Caco-2 (cell line): ENCODE measurements at regions of chr11 and their contacts with region 1.

Region 1: DNA sequence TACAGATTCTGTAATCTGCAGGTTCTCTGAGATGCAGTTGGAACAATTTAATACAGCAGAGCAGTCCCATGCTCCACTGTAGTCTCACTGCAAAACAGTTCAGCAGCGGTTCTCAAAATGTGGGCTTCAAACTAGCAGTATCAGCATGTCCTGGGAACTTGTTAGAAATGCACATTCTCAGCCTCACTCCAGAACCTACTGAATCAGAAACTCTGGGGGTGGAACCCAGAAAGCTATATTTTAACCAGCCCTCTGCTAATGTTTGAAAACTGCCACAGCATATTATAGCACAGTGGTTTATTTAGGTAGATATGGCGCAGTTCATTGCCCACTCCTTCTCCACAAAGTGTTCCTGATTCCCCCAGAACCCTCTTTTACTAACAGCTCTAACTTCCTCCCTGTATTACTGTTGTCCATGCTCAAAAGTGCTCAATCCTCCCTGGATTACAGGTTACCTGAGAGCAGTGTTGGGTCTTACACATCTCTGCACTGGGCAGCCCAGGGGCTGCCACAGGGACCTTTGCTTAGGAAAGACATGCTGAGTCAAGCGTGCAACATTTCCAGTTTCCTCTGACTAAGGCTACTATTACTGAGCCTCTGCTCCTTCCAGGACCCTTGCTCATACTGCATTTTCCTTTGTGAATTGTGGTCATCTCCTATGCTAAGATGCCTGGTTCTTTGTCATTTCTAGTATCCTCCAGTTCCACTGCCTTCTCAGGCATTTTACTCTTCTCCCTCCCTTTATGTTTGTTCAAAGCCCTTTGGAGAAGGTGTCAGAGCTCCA is 7.7 kb upstream of the DGAT2 start:
- DNase-seq: no peak
- H3K4me3 ChIP-seq: no peak overlapping the region
- H3K4me3 Mint-ChIP-seq: no peak overlapping the region
- H3K27ac Mint-ChIP-seq: peak overlapping the region; percentile 15
- H3K4me1 ChIP-seq: peaks cover 35% of the 10 kb centered on the region
- H3K4me1 Mint-ChIP-seq: peaks cover 34% of the 10 kb centered on the region
- H3K27me3 ChIP-seq: no peaks in the 10 kb centered on the region
- H3K27me3 Mint-ChIP-seq: no peaks in the 10 kb centered on the region
- CTCF ChIP-seq: no peak

Region 2: DNA sequence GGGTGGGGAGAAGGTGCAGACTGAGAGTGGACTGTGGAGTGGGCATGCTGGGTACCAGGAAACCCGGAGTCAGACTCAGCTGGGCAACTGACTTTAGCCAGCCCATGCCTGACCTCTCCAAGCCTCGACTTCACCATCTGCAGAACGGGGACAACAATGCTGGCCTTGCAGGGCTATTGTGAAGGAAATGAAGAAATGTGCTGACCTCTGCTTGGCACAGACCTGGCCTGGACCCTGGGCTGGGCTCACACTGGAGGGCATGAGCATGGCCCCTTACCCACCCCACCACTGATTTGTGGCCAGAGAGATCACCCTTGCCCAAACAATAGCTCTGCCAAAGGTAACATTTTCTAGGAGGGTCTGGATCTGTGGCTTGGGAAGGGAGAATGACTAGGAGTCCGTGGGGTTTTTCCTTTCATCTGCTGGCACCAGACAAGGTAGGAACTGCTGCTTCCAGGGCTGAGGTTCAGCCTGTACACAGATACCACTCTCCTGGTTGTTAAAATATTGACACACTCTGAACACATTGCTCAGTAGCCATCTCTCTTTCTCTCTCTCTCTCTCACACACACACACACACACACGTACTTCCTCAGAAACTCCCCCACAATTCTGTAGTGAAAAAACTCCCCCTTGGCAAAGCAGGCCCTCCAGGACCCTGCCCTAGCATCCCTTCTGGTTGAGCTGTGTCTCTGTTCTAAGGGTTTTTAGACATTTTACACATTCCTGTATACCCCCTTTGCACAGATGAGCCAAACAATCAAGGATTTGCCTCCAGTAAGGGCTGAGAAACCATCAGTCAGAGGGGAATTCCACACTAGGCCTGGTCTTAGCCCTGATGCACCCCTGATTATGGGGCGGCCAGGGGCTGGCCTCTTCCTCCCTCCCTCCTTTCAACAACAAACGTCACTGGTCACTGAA is 42.2 kb before region 1 on chr11:
- CTCF ChIA-PET with region 1: interaction called, 10 read pairs
- POLR2A ChIA-PET with region 1: no interaction called
- intact Hi-C with region 1: loop called (anchors 1 kb)
- DNase-seq: no peak
- H3K4me3 ChIP-seq: no peak overlapping the region
- H3K4me3 Mint-ChIP-seq: no peak overlapping the region
- H3K27ac Mint-ChIP-seq: peak overlapping the region; percentile 65
- H3K4me1 ChIP-seq: peaks cover 28% of the 10 kb centered on the region
- H3K4me1 Mint-ChIP-seq: peaks cover 18% of the 10 kb centered on the region
- H3K27me3 ChIP-seq: no peaks in the 10 kb centered on the region
- H3K27me3 Mint-ChIP-seq: no peaks in the 10 kb centered on the region
- CTCF ChIP-seq: no peak

Region 3: DNA sequence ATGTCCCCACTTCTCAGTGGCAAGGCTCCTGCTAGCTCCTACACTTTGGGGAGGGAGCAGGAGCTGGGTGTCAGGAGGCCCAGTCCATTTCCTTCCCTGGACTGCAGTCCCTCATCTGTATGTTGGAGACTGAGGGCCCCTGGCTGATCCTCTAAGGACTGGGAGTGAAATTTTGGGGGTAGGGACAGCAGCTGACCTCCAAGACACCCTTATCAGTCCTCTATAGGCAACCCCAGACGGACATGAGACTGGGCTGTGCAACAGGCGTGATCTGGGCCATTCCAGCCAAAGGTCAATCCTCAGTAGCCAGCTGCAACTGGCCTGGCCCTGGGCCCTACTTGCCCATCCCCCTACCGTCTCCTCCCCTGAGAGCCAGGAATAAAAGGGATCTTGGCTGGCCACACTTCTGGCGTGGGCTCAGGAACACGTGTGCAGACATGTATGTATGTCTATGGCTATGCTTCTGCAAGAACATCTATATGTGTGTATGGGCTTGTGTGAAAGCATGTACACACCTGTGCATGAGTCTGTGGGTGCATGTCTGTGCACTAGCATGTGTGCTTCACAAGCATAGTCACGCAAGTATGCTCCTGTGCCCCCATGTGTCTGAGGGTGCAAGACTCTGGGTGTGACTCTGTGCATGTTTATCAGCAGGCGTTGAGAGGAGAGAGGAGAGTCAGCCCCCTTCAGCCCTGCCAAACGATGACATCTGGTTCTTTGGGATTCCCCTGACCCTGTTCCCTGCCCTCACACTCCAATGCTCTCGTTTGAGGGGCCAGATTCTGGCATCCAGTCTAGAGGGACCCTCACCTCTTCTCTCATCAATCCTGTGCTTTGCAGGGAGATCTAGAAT is 17.0 kb before region 1 on chr11:
- CTCF ChIA-PET with region 1: no interaction called
- POLR2A ChIA-PET with region 1: no interaction called
- intact Hi-C with region 1: loop called (anchors 2 kb)
- DNase-seq: peak in 1 of 2 experiments; percentile 62
- H3K4me3 ChIP-seq: no peak overlapping the region
- H3K4me3 Mint-ChIP-seq: no peak overlapping the region
- H3K27ac Mint-ChIP-seq: no peak overlapping the region
- H3K4me1 ChIP-seq: peaks cover 28% of the 10 kb centered on the region
- H3K4me1 Mint-ChIP-seq: peaks cover 24% of the 10 kb centered on the region
- H3K27me3 ChIP-seq: no peaks in the 10 kb centered on the region
- H3K27me3 Mint-ChIP-seq: no peaks in the 10 kb centered on the region
- CTCF ChIP-seq: no peak

Region 4: GRCh38 chr11:75786101-75786736 is 25.3 kb after region 1 on chr11:
- CTCF ChIA-PET with region 1: interaction called, 10 read pairs
- POLR2A ChIA-PET with region 1: no interaction called
- intact Hi-C with region 1: no loop called
- DNase-seq: peak; percentile 97 to 98
- H3K4me3 ChIP-seq: no peak overlapping the region
- H3K4me3 Mint-ChIP-seq: peak overlapping the region; percentile 53
- H3K27ac Mint-ChIP-seq: peak overlapping the region; percentile 77
- H3K4me1 ChIP-seq: peaks cover 60% of the 10 kb centered on the region
- H3K4me1 Mint-ChIP-seq: peaks cover 57% of the 10 kb centered on the region
- H3K27me3 ChIP-seq: no peaks in the 10 kb centered on the region
- H3K27me3 Mint-ChIP-seq: no peaks in the 10 kb centered on the region
- CTCF ChIP-seq: no peak

Region 5: DNA sequence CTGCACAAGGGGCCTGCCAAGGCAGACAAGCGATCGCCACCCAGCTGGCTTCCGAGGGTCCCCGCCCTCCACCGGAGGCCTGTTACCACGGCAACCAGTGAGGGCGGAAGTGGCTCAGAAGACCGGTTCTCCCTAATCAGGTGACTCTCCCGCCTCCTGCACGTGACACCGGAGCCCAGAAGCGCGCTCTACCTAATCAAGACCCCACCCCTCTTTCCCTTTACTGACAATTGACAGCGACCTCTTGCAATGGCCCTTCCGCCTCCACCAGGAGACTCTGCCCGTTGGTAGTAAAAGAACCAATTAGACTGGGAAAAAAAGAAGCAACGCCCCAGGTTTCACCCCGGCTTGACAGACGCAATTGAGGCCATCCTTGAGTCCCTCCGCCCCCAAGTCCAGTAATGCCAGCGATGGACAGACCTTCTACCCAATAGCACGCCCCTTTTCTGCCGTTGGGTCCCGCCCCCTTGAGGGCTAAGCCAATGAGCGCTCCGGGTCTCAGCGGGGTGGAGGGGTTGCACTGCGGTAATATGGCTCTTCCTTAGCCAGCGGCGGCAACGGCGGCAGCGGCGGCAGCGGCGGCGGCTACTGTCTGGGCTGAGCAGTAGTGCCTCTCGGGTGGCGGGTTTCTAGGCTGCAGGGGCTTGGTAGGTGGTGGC is 53.9 kb after region 1 on chr11 and contains the start of gene UVRAG:
- CTCF ChIA-PET with region 1: no interaction called
- POLR2A ChIA-PET with region 1: no interaction called
- intact Hi-C with region 1: no loop called
- DNase-seq: peak; percentile 100
- H3K4me3 ChIP-seq: peak within 1 kb of the TSS; percentile 69
- H3K4me3 Mint-ChIP-seq: no peak within 1 kb of the TSS
- H3K27ac Mint-ChIP-seq: no peak within 1 kb of the TSS
- H3K4me1 ChIP-seq: peaks cover 10% of the 10 kb centered on the region
- H3K4me1 Mint-ChIP-seq: peaks cover 8% of the 10 kb centered on the region
- H3K27me3 ChIP-seq: no peaks in the 10 kb centered on the region
- H3K27me3 Mint-ChIP-seq: no peaks in the 10 kb centered on the region
- CTCF ChIP-seq: peak in 1 of 2 experiments; percentile 23
- total RNA-seq, gene UVRAG: 30.4 and 31.3 TPM in 2 replicates

Region 6: DNA sequence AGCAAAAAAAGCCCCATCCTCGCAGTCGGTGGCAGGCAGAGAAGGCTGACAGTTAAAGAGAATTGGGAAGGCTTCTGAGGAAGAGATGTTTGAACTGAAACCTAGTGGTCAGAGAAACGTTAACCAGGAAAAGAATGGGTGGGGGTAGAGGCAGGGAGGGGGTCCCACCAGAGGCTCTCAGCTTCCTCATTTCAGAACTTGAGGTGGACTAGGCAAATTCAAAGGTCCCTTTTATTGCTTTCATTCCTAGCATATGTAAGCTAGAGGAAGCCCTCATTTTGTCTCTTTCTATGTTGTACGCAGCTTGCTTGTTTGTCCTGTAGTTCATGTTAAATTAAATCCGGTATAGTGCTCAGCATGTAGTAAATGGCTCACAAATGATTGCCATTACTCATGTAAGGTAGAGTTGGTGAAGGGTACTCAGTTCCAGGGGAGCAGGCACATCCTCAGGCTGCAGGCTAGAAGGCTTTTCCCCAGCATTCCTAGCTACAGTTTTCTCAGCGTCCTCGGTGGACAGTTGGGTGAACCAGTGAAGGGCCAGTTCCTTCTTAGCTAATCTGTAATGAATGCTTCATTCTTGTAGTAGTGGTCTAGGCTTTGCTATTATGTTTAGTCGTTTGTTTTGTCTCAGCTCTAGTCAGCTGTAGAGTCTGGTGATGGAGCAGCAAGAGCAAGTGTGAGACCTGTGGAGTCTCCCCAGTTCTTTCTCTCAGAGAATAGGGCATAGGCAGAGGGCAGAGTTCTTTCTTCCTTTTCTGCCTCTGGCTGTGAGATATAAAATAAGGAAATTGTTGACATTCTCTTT is 112.7 kb after region 1 on chr11:
- CTCF ChIA-PET with region 1: no interaction called
- POLR2A ChIA-PET with region 1: no interaction called
- intact Hi-C with region 1: no loop called
- DNase-seq: no peak
- H3K4me3 ChIP-seq: no peak overlapping the region
- H3K4me3 Mint-ChIP-seq: no peak overlapping the region
- H3K27ac Mint-ChIP-seq: peak overlapping the region; percentile 10
- H3K4me1 ChIP-seq: peaks cover 18% of the 10 kb centered on the region
- H3K4me1 Mint-ChIP-seq: peaks cover 10% of the 10 kb centered on the region
- H3K27me3 ChIP-seq: no peaks in the 10 kb centered on the region
- H3K27me3 Mint-ChIP-seq: no peaks in the 10 kb centered on the region
- CTCF ChIP-seq: no peak